Common myeloid progenitor, CD34-positive (primary cell): ENCODE measurements at regions of chr7 and their contacts with region 1.

Region 1: DNA sequence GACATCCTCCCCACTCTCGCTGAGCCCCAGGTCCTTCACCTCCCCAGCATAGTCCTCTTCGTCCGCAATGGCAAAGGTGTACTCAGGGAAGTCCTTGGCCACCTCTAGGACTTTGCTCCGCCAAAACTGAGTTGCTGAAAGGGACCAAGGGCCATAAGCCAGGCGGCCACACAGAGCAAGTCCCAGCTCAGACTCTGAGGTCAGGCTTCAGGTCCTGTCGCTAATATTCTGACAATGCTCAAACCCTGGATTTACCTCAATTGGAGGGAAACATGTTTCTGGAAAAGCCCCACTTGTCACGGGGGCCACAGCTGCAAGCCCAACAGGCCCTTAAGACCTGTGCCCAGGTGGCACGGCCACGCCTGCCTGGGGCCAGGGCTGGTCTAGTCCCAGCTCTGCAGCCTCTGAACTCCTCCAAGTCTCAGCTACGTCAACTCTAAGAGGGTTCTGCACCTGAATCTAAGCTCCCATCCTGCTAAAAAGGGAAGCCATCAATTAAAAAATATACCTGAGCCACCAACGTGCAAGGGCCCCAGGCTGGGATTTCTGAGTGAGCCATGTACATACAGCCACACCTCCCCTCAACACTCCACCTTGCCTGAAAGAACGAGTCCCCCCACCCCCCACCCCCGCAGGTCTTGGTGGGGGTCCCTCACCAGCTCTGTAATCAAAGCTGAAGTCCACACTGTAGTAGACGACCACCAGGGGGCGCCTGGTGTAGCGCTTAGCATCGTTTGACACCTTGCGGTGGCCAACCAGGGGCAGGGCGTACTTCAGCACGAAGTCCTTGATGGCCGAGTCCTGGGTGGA is 22.9 kb downstream of the PDIA4 start:
- DNase-seq: peak; percentile 86 to 89 (median 87)
- H3K4me3 ChIP-seq: no peak overlapping the region
- H3K27ac ChIP-seq: no peak overlapping the region
- H3K4me1 ChIP-seq: no peaks in the 10 kb centered on the region
- H3K27me3 ChIP-seq: no peaks in the 10 kb centered on the region

Region 2: GRCh38 chr7:148987010-148987750 is 18.3 kb before region 1 on chr7:
- CTCF ChIA-PET with region 1: interaction called, 10 read pairs
- POLR2A ChIA-PET with region 1: interaction called, 3 read pairs
- DNase-seq: peak; percentile 91 to 96 (median 95)
- H3K4me3 ChIP-seq: peak overlapping the region; percentile 76 to 99 (median 91)
- H3K27ac ChIP-seq: peak overlapping the region; percentile 95 to 99
- H3K4me1 ChIP-seq: peaks cover 5 to 40% (median 21%) of the 10 kb centered on the region in 4 experiments
- H3K27me3 ChIP-seq: no peaks in the 10 kb centered on the region

Region 3: GRCh38 chr7:148994601-148995000 is 10.8 kb before region 1 on chr7:
- CTCF ChIA-PET with region 1: interaction called, 16 read pairs
- POLR2A ChIA-PET with region 1: no interaction called
- DNase-seq: no peak
- H3K4me3 ChIP-seq: no peak overlapping the region
- H3K27ac ChIP-seq: no peak overlapping the region
- H3K4me1 ChIP-seq: no peaks in the 10 kb centered on the region
- H3K27me3 ChIP-seq: no peaks in the 10 kb centered on the region

Region 4: DNA sequence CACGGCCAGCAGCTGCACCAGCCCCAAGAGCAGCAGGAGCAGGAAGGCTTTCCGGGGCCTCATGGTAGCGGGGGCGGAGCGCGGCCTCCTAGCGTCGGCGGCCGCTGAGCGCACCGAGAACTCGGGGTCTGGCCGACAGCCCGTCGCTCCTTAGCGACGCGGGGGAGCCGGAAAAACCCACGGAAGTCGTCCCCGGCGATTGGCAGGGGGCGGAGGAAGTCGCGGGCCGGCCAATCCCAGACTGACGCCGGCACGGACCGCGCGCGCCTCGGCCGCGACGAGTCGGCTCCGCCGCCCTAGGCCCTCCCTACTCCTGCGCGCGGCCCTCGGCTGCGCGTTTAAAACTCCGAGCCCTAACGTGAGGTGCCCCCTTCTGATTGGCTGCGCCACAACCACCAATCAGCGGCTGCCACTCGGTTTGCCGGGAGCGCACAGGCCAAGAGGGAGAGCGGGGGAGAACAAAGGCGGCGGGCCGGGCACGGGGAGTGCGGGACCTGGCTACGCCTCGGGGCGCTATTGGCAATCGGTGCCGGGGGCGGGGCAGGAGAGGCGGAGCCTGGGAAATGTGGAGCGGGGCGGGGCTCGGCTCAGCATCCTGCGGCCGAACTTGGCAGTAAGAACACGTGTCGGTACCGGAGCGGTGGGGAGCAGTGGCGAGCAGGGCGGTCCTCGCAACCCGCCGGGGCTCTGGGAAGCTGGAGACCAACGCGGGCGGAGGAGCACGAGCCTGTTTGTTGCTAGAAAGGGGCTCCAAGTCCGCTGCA is 23.1 kb after region 1 on chr7 and contains the start of gene PDIA4:
- CTCF ChIA-PET with region 1: interaction called, 30 read pairs
- POLR2A ChIA-PET with region 1: no interaction called
- DNase-seq: peak; percentile 99 to 100 (median 100)
- H3K4me3 ChIP-seq: peak within 1 kb of the TSS; percentile 65 to 96 (median 87)
- H3K27ac ChIP-seq: peak within 1 kb of the TSS; percentile 75 to 91
- H3K4me1 ChIP-seq: peaks cover 11 to 22% (median 18%) of the 10 kb centered on the region in 4 experiments
- H3K27me3 ChIP-seq: peaks cover 0 to 1% (median 0%) of the 10 kb centered on the region in 5 experiments

Region 5: GRCh38 chr7:149071641-149072437 is 66.4 kb after region 1 on chr7:
- CTCF ChIA-PET with region 1: interaction called, 14 read pairs
- POLR2A ChIA-PET with region 1: interaction called, 3 read pairs
- DNase-seq: peak; percentile 40 to 90 (median 79)
- H3K4me3 ChIP-seq: peak overlapping the region in 1 of 7 experiments; percentile 53
- H3K27ac ChIP-seq: no peak overlapping the region
- H3K4me1 ChIP-seq: peaks cover 0 to 2% (median 0%) of the 10 kb centered on the region in 4 experiments
- H3K27me3 ChIP-seq: no peaks in the 10 kb centered on the region

Region 6: GRCh38 chr7:149087376-149087775 is 81.9 kb after region 1 on chr7:
- CTCF ChIA-PET with region 1: interaction called, 25 read pairs
- POLR2A ChIA-PET with region 1: interaction called, 3 read pairs
- DNase-seq: no peak
- H3K4me3 ChIP-seq: no peak overlapping the region
- H3K27ac ChIP-seq: no peak overlapping the region
- H3K4me1 ChIP-seq: peaks cover 0 to 20% (median 7%) of the 10 kb centered on the region in 4 experiments
- H3K27me3 ChIP-seq: no peaks in the 10 kb centered on the region